A673 (cell line): ENCODE measurements at regions of chr5 and their contacts with region 1.

Region 1: DNA sequence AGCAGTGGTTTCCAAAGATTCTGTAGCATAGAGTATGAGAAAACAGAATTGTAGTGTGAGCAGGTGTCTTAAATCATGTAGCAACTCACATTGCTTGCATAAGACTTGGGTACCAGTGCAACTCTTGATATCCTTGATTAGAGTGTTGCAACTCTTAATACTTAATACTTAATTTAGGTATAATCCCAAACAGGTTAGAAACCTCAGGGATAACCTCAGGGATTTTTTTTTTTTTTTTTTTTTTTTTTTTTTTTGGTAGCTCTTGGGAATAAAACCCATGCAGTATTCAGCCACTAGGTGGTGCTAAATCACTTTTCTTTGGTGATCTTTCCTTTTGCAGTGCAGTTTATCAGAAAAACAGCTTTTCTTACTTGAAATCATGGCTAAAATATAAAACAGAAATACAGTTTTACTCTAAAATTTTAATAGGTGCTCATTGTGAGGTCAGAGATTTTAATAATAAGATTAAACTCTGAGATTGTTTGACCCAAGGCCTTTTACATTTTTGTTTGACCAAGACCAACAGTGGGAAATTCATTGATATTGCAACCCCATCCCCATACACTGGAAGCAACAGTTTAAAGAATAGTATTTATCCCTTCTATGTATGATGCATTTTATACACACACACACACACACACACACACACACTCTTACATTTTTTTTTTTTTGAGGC is 55.3 kb downstream of the ERAP1 start:
- DNase-seq: peak; percentile 76
- H3K4me3 ChIP-seq: no peak overlapping the region
- H3K27ac ChIP-seq: no peak overlapping the region
- H3K4me1 ChIP-seq: no peaks in the 10 kb centered on the region
- H3K27me3 ChIP-seq: no peaks in the 10 kb centered on the region
- CTCF ChIP-seq: peak; percentile 82

Region 2: GRCh38 chr5:96354237-96354636 is 398.2 kb before region 1 on chr5:
- CTCF ChIA-PET with region 1: interaction called, 18 read pairs
- POLR2A ChIA-PET with region 1: no interaction called
- intact Hi-C with region 1: no loop called
- DNase-seq: no peak
- H3K4me3 ChIP-seq: no peak overlapping the region
- H3K27ac ChIP-seq: no peak overlapping the region
- H3K4me1 ChIP-seq: no peaks in the 10 kb centered on the region
- H3K27me3 ChIP-seq: no peaks in the 10 kb centered on the region
- CTCF ChIP-seq: no peak

Region 3: GRCh38 chr5:96855031-96855872 is 102.8 kb after region 1 on chr5:
- CTCF ChIA-PET with region 1: no interaction called
- POLR2A ChIA-PET with region 1: no interaction called
- intact Hi-C with region 1: no loop called
- DNase-seq: peak; percentile 26
- H3K4me3 ChIP-seq: no peak overlapping the region
- H3K27ac ChIP-seq: peak overlapping the region; percentile 64
- H3K4me1 ChIP-seq: peaks cover 38% of the 10 kb centered on the region
- H3K27me3 ChIP-seq: no peaks in the 10 kb centered on the region
- CTCF ChIP-seq: no peak

Region 4: DNA sequence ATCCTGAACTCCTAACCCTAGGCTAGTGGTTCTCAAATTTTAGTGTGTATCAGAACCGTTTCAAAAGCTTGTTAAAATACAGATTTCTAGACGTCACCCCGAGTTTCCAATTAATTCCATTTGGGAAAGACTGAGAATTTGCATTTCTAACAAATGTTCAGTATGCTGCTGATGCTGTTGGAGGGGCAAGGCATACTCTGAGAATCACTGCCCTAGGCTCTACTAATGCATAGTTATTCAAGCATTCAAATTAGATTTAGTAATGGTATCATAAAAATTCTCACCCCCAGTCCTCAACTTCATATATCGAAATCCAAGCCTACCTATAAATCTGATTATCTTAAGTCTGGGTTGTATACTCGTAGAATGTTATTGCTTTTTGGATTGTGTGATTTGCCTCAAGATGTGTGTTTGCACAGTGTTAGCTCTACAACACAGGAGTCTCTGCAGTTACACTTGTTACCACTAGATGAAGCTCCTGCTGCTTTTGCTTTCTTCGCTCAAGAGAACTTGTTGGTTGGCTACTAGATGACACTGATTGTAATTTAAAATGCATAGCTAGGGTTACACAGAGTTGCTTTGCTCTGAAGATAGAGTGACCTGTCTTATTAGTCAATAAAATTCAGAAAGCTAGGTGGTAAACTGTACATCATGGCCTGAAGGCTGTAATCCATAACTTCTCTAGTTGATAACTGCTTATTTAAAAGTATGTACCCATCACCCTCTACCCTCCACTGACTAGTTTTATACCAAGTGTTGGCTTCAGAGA is 116.3 kb after region 1 on chr5:
- CTCF ChIA-PET with region 1: interaction called, 11 read pairs
- POLR2A ChIA-PET with region 1: no interaction called
- intact Hi-C with region 1: loop called (anchors 2 kb)
- DNase-seq: peak; percentile 77
- H3K4me3 ChIP-seq: no peak overlapping the region
- H3K27ac ChIP-seq: no peak overlapping the region
- H3K4me1 ChIP-seq: peaks cover 3% of the 10 kb centered on the region
- H3K27me3 ChIP-seq: no peaks in the 10 kb centered on the region
- CTCF ChIP-seq: peak; percentile 94

Region 5: GRCh38 chr5:97142521-97143254 is 390.2 kb after region 1 on chr5 and contains the start of gene LIX1:
- CTCF ChIA-PET with region 1: interaction called, 24 read pairs
- POLR2A ChIA-PET with region 1: interaction called, 15 read pairs
- intact Hi-C with region 1: loop called (anchors 1 kb)
- DNase-seq: peak; percentile 86
- H3K4me3 ChIP-seq: no peak within 1 kb of the TSS
- H3K27ac ChIP-seq: no peak within 1 kb of the TSS
- H3K4me1 ChIP-seq: no peaks in the 10 kb centered on the region
- H3K27me3 ChIP-seq: no peaks in the 10 kb centered on the region
- CTCF ChIP-seq: peak; percentile 75
- total RNA-seq, gene LIX1: not detected in 2 replicates